B cell (primary cell): ENCODE measurements at regions of chr15 and their contacts with region 1.

Region 1: DNA sequence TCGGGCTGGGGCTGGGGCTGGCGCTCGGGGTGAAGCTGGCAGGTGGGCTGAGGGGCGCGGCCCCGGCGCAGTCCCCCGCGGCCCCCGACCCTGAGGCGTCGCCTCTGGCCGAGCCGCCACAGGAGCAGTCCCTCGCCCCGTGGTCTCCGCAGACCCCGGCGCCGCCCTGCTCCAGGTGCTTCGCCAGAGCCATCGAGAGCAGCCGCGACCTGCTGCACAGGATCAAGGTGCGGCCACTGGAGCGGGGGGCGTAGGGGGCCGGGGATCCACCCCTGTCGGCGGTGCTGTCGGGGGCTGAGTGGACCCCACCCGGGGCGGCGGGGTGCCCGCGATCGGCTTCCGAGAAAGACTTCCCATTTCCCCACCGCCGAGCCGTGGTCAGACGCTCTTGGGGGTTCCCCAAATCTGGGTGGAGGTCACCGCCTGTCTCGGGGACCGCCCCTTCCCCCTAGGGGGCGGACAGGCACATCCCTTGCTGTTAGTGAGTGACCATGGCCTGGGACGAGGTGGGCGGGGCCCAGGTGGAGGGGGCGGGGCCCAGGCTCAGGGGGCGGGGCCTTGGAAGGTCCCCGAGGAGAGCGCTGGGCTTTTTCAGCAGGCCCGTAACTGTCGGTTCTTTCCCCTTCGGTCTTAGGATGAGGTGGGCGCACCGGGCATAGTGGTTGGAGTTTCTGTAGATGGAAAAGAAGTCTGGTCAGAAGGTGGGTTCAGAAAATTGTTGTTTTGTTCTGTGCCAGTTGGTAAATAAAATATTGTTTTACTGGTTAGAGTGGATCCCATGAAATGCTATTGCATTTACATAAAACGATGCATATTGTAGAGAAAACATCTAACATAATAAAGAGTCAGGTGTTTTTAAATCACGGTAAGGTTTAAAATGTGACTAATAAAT is 587 bp downstream of the LACTB start:
- DNase-seq: peak; percentile 87
- ATAC-seq: peak; percentile 87
- H3K4me3 ChIP-seq: peak overlapping the region; percentile 66 to 95 (median 88)
- H3K4me3 Mint-ChIP-seq: peak overlapping the region; percentile 86
- H3K27ac ChIP-seq: peak overlapping the region; percentile 71 to 85
- H3K27ac Mint-ChIP-seq: peak overlapping the region; percentile 93
- H3K4me1 ChIP-seq: peaks cover 6 to 9% of the 10 kb centered on the region in 2 donors
- H3K4me1 Mint-ChIP-seq: peaks cover 14% of the 10 kb centered on the region
- H3K27me3 ChIP-seq: no peaks in the 10 kb centered on the region
- H3K27me3 Mint-ChIP-seq: no peaks in the 10 kb centered on the region
- CTCF ChIP-seq: peak; percentile 12

Region 2: DNA sequence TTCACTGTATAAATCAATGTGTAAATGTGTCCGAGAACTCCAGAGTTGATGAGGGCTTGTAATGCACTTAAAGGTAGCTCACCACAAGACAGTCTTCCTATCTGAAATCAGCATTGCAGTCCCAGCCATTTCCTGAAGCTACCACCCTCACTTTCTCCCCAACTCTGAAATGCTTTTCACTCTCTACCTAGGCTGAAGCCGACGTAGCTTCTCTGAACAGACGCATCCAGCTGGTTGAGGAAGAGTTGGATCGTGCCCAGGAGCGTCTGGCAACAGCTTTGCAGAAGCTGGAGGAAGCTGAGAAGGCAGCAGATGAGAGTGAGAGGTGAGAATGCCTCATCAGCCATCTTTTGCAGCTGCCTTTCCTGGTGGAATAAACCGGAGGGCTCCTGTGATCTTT is 65.5 kb before region 1 on chr15:
- CTCF ChIA-PET with region 1: no interaction called
- POLR2A ChIA-PET with region 1: no interaction called
- intact Hi-C with region 1: no loop called
- DNase-seq: no peak
- ATAC-seq: no peak
- H3K4me3 ChIP-seq: no peak overlapping the region
- H3K4me3 Mint-ChIP-seq: no peak overlapping the region
- H3K27ac ChIP-seq: no peak overlapping the region
- H3K27ac Mint-ChIP-seq: no peak overlapping the region
- H3K4me1 ChIP-seq: no peaks in the 10 kb centered on the region
- H3K4me1 Mint-ChIP-seq: no peaks in the 10 kb centered on the region
- H3K27me3 ChIP-seq: no peaks in the 10 kb centered on the region
- H3K27me3 Mint-ChIP-seq: no peaks in the 10 kb centered on the region
- CTCF ChIP-seq: no peak

Region 3: GRCh38 chr15:63135804-63136203 is 13.6 kb after region 1 on chr15:
- CTCF ChIA-PET with region 1: no interaction called
- POLR2A ChIA-PET with region 1: no interaction called
- intact Hi-C with region 1: no loop called
- DNase-seq: no peak
- ATAC-seq: no peak
- H3K4me3 ChIP-seq: no peak overlapping the region
- H3K4me3 Mint-ChIP-seq: no peak overlapping the region
- H3K27ac ChIP-seq: no peak overlapping the region
- H3K27ac Mint-ChIP-seq: no peak overlapping the region
- H3K4me1 ChIP-seq: no peaks in the 10 kb centered on the region
- H3K4me1 Mint-ChIP-seq: peaks cover 6% of the 10 kb centered on the region
- H3K27me3 ChIP-seq: no peaks in the 10 kb centered on the region
- H3K27me3 Mint-ChIP-seq: no peaks in the 10 kb centered on the region
- CTCF ChIP-seq: no peak

Region 4: DNA sequence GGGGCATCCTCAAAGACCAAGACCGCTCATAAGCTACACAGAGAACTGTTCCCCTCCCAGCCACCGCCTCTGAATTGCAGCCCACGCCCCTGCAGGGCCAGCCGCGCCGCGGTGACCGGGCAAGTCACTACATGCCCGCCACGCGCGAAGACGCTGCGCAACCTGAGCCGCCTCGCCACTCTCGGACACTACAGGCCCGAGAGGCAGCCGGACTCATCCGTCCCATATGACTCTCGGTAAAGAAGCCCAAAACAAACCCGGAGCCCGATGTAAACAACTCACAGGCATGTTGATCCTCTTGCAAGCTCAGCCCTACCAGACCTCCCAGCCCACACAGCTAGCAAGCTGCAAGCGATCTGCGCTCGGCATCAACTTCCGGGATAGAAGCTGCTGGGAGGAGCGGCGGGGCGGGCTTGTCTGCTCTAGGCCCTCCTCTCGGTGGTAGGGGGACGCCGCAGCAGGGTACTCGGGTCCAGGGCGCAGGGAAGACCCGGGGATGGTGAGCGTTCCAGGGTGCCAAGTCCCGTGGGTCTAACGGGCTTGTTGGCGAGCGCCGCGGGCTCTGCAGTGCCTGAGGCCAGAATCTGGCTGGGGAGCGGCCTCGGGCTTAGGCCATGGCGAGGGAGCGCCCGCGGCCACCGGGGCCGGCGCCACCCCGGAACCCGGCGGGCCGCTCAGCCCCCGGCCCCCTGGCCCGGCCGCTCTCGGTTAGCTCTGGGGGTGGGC is 35.0 kb after region 1 on chr15 and contains the start of gene RPS27L:
- CTCF ChIA-PET with region 1: no interaction called
- POLR2A ChIA-PET with region 1: interaction called, 4 read pairs
- intact Hi-C with region 1: loop called (anchors 1 kb)
- DNase-seq: peak; percentile 90
- ATAC-seq: peak; percentile 96
- H3K4me3 ChIP-seq: peak within 1 kb of the TSS; percentile 83 to 95 (median 88)
- H3K4me3 Mint-ChIP-seq: peak within 1 kb of the TSS; percentile 96
- H3K27ac ChIP-seq: peak within 1 kb of the TSS; percentile 68 to 81
- H3K27ac Mint-ChIP-seq: peak within 1 kb of the TSS; percentile 99
- H3K4me1 ChIP-seq: peaks cover 14 to 17% of the 10 kb centered on the region in 2 donors
- H3K4me1 Mint-ChIP-seq: peaks cover 28% of the 10 kb centered on the region
- H3K27me3 ChIP-seq: no peaks in the 10 kb centered on the region
- H3K27me3 Mint-ChIP-seq: no peaks in the 10 kb centered on the region
- CTCF ChIP-seq: no peak
- total RNA-seq, gene RPS27L: 49.4 and 50.9 TPM in 2 replicates

Region 5: DNA sequence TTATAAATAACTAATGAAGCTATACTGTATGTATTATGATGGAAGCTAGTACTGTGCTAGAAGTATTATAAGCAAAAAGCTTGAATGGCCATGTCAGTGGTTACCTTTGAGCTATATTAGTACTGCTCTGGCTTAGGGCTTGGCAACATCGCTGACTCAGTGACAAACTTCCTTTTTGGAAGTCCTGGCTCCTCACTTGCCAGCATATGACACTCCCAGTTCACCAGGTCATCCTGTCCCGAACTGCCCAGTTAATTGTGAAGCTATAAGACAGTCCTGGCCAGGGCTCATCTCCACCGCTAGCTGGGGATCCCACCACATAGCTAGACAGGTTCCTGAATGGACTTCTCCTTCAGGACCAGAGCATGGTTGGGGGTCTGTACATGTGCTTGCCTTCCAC is 99.1 kb after region 1 on chr15:
- CTCF ChIA-PET with region 1: no interaction called
- POLR2A ChIA-PET with region 1: no interaction called
- intact Hi-C with region 1: no loop called
- DNase-seq: no peak
- ATAC-seq: no peak
- H3K4me3 ChIP-seq: no peak overlapping the region
- H3K4me3 Mint-ChIP-seq: no peak overlapping the region
- H3K27ac ChIP-seq: no peak overlapping the region
- H3K27ac Mint-ChIP-seq: no peak overlapping the region
- H3K4me1 ChIP-seq: peaks cover 1 to 3% of the 10 kb centered on the region in 2 donors
- H3K4me1 Mint-ChIP-seq: peaks cover 42% of the 10 kb centered on the region
- H3K27me3 ChIP-seq: no peaks in the 10 kb centered on the region
- H3K27me3 Mint-ChIP-seq: no peaks in the 10 kb centered on the region
- CTCF ChIP-seq: no peak

Region 6: DNA sequence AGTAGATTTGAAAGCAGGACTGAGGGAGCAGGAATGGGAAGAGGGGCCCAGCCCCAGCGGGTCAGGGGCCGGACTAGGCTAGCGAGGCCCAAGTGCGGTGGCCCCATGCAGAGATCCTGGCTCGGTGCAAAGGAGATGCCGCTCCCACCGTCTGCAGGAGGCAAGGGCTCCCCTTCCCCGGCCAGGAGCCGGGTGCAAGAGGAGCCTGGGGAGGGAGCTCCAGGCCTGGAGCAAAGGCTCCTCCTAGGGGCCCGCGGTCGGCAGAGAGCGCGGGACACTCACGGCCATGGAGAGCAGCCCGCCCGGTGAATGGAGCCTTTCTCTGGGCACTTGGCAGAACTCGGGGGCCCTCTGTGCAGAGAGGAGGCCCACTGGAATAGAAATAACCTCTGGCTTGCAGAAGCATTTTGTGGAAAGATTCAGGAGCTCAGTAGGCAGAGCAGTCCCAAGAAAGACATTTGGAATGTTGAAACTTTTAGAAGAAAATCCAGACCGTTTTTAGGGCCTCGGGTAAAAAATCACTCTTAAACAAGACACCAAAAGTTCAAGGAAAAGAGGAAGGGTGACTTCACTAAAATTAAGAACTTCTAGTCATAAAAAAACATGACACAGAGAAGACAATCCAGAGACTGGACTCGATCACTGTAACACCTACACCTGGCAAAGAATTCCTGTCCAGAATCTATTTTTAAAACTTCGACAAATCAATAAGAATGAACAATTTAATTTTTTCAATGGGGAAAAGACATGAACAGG is 339.2 kb after region 1 on chr15:
- CTCF ChIA-PET with region 1: no interaction called
- POLR2A ChIA-PET with region 1: no interaction called
- intact Hi-C with region 1: no loop called
- DNase-seq: no peak
- ATAC-seq: no peak
- H3K4me3 ChIP-seq: no peak overlapping the region
- H3K4me3 Mint-ChIP-seq: no peak overlapping the region
- H3K27ac ChIP-seq: no peak overlapping the region
- H3K27ac Mint-ChIP-seq: no peak overlapping the region
- H3K4me1 ChIP-seq: peaks cover 0 to under 1% of the 10 kb centered on the region in 2 donors
- H3K4me1 Mint-ChIP-seq: peaks cover 3% of the 10 kb centered on the region
- H3K27me3 ChIP-seq: no peaks in the 10 kb centered on the region
- H3K27me3 Mint-ChIP-seq: no peaks in the 10 kb centered on the region
- CTCF ChIP-seq: no peak

Region 7: DNA sequence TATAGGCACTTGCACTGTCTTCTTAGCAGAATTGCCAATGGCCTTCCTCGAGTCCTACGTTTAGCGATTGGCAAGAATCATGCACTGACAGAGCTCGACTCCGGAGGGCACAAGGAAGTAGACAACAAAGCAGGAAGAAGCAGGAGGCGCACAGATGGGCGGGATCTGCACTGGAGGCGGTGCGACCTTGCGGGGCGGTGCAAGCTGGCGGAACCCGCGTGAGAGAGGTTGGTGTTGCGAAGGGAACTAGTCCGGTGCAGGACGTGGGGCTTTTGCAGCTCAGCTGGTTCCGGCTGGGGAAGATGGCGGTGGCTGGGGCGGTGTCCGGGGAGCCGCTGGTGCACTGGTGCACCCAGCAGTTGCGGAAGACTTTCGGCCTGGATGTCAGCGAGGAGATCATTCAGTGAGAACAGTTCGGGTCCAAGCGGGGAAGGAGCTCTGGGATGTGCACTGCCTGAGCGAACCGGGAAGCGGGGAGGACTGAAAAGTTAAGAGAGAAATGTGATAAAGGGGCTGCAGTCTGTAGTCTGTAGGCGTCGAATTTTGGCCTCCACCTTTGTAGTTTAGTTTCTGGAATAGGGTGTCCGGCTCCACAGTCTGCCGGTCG is 1265.4 kb after region 1 on chr15 and contains the start of gene TRIP4:
- CTCF ChIA-PET with region 1: no interaction called
- POLR2A ChIA-PET with region 1: no interaction called
- intact Hi-C with region 1: loop called (anchors 10 kb)
- DNase-seq: peak; percentile 96
- ATAC-seq: peak; percentile 100
- H3K4me3 ChIP-seq: peak within 1 kb of the TSS; percentile 63 to 97 (median 82)
- H3K4me3 Mint-ChIP-seq: peak within 1 kb of the TSS; percentile 97
- H3K27ac ChIP-seq: peak within 1 kb of the TSS; percentile 58 to 70
- H3K27ac Mint-ChIP-seq: peak within 1 kb of the TSS; percentile 95
- H3K4me1 ChIP-seq: peaks cover 10 to 18% of the 10 kb centered on the region in 2 donors
- H3K4me1 Mint-ChIP-seq: peaks cover 15% of the 10 kb centered on the region
- H3K27me3 ChIP-seq: no peaks in the 10 kb centered on the region
- H3K27me3 Mint-ChIP-seq: no peaks in the 10 kb centered on the region
- CTCF ChIP-seq: no peak
- total RNA-seq, gene TRIP4: 35.7 and 38.2 TPM in 2 replicates